Left colon (tissue), 2 donors: ENCODE measurements at regions of chr10 and their contacts with region 1.

Region 1: DNA sequence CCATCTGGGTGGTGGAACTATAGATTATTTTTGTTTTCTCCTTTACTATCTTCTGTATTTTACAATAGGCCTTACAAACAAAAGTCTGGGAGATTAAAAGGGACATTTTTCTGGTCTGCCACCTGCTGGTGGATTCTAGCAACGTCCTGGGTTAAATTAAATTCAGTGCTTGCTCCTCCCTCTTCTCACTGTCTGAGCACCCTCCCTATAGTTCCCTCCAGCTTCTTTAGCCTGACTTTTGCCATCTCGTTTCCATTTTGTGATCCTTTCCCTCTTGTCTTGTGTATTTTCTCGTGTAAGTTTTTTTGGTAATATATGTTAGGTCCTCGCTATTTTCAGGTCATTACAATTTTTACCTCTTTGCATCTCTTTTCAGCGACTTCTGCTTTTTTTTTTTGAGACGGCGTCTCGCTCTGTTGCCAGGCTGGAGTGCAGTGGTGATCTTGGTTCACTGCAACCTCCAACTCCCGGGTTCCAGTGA is 16.1 kb downstream of the ANKRD16 start:
- DNase-seq: peak in 1 of 2 donors; percentile 74
- ATAC-seq: peak; percentile 89

Region 2: GRCh38 chr10:5698062-5698461 is 175.5 kb before region 1 on chr10:
- intact Hi-C with region 1: no loop called
- DNase-seq: no peak
- ATAC-seq: no peak

Region 3: GRCh38 chr10:5800790-5801189 is 72.8 kb before region 1 on chr10:
- intact Hi-C with region 1: no loop called
- DNase-seq: no peak
- ATAC-seq: no peak

Region 4: DNA sequence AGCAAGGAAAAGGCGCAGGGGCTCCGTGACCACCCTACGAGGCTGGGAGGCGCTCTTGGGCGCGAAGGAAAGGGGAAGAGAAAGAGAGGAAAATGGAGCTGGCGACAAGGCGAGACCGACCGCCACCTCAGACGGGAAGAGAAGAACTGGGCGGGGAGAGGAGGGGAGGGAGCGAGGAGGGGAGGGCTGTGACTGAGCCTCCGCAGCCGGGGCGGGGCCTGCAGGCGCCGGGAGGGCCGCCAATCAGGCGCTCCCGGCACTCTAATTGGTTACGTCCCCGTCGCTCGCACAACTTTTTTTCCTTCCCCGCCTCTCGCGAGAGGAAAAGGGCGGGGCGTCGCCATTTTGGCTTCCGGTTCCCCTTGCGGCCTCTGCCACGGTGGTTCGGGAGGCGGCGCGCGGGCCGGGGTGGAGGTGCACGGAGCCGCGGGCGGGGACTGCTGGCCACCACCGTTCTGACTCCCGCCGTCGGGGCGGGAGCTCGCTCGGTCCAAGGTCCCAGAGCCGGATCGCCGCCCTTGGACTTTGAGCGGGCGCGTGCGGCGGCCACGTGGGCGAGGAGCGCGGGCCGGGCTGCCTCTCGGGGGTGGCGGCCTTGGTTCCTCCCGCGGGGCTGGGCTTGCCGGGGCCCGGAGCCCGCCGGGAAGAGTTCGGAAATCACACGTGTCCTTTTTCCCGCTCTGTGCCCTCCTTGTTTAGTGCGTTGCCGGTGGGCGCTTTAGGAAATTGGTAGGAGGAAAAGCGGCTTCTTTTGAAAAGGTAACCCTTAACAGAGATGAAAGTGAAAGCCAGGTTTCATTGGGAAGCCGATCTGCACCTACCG is 60.1 kb before region 1 on chr10 and contains the start of gene GDI2:
- intact Hi-C with region 1: loop called in 1 of 2 experiments (anchors 10 kb)
- DNase-seq: peak; percentile 95 to 97
- ATAC-seq: peak; percentile 89
- total RNA-seq, gene GDI2: 211 to 218 TPM

Region 5: GRCh38 chr10:6086375-6087233 is 213.0 kb after region 1 on chr10:
- intact Hi-C with region 1: no loop called
- DNase-seq: peak; percentile 88 to 91
- ATAC-seq: peak; percentile 69

Region 6: DNA sequence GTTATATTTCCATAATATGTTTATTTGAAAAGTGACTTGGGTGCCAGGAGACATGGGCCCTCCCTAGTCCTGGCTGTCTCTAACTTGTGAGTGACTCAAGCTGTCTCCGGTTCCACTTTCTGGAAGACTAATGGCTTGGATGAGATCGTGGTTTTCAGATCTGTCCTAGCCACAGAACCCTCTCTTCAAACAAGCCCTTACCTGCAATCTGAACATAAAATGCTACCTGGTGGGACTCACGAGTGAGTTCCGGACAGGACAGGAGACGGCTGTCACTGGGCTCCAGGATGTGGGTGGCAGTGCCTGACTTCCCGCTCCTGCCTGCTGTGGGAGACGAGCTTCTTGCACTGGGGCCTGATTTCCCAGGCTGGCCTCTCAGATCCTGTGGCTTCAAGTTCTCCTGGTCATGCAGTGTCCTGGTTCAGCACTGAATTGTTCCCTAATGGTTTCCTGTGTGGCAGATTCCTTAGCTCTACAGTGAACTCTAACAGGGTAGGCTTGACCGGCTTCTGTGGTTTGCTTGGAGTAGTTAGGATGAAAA is 303.2 kb after region 1 on chr10:
- intact Hi-C with region 1: no loop called
- DNase-seq: no peak
- ATAC-seq: no peak